Vagina (tissue), 2 donors: ENCODE measurements at regions of chr7 and their contacts with region 1.

Region 1: GRCh38 chr7:127047521-127047920 is 205.2 kb downstream of the GRM8 start:
- DNase-seq: no peak
- H3K4me3 ChIP-seq: no peak overlapping the region
- H3K27ac ChIP-seq: no peak overlapping the region
- H3K4me1 ChIP-seq: no peaks in the 10 kb centered on the region
- H3K27me3 ChIP-seq: no peaks in the 10 kb centered on the region
- CTCF ChIP-seq: no peak
- POLR2A ChIP-seq: no peak

Region 2: GRCh38 chr7:127018889-127019288 is 28.6 kb before region 1 on chr7:
- intact Hi-C with region 1: loop called (anchors 1 kb)
- DNase-seq: no peak
- H3K4me3 ChIP-seq: no peak overlapping the region
- H3K27ac ChIP-seq: no peak overlapping the region
- H3K4me1 ChIP-seq: no peaks in the 10 kb centered on the region
- H3K27me3 ChIP-seq: no peaks in the 10 kb centered on the region
- CTCF ChIP-seq: no peak
- POLR2A ChIP-seq: no peak